Mucosa of descending colon (tissue), 3 donors: ENCODE measurements at regions of chr18 and their contacts with region 1.

Region 1: GRCh38 chr18:45879681-45880655 is 54.5 kb downstream of the SIGLEC15 start:
- DNase-seq: peak; percentile 65 to 76 (median 74)
- ATAC-seq: peak; percentile 99
- H3K4me3 ChIP-seq: no peak overlapping the region
- H3K4me1 ChIP-seq: no peaks in the 10 kb centered on the region
- CTCF ChIP-seq: peak; percentile 97

Region 2: GRCh38 chr18:45670281-45670962 is 209.5 kb before region 1 on chr18:
- intact Hi-C with region 1: loop called in 1 of 2 experiments (anchors 10 kb)
- DNase-seq: no peak
- ATAC-seq: peak; percentile 45
- H3K4me3 ChIP-seq: no peak overlapping the region
- H3K4me1 ChIP-seq: no peaks in the 10 kb centered on the region
- CTCF ChIP-seq: no peak

Region 3: DNA sequence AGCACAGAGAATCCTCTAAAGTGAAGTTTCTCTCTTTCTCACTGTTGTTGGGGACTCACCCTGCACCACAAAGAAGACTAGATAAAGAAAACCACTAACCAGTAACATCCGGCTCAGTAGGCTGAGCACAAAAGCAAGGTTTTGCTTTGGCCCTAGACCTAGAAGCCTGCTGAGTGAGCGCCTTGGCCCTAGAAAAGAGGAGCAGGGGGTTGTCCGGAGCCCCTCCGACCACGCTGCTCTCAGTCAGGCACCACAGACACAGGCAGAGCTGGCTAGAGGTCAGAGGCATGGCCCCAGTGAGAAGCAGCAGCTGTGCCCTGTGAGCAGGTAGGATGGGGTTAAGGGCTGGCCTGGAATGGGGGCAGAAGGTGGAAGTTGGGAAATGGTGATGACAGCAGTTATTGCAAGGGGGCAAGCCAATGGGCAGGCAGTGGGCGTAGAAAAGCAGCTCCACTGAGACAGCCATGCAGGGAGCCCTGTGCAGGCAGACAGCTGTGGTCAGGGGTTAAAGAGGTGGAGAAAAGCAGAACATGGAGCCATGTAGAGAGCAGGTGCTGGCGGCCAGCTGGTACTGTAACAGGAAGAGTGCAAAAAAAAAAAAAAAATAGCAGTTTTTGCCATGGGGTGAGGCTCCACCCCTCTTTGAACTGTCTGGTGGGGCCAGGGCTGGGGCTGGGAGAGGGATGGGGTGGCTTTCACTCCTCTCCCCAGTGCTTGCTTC is 192.9 kb before region 1 on chr18:
- intact Hi-C with region 1: loop called in 1 of 2 experiments (anchors 10 kb)
- DNase-seq: peak; percentile 24 to 70 (median 35)
- ATAC-seq: peak; percentile 81
- H3K4me3 ChIP-seq: no peak overlapping the region
- H3K4me1 ChIP-seq: no peaks in the 10 kb centered on the region
- CTCF ChIP-seq: no peak

Region 4: GRCh38 chr18:46297621-46298020 is 417.7 kb after region 1 on chr18:
- intact Hi-C with region 1: no loop called
- DNase-seq: no peak
- ATAC-seq: no peak
- H3K4me3 ChIP-seq: no peak overlapping the region
- H3K4me1 ChIP-seq: no peaks in the 10 kb centered on the region
- CTCF ChIP-seq: no peak